Right ventricle myocardium superior (tissue), 1 donor: ENCODE measurements at regions of chr21 and their contacts with region 1.

Region 1: DNA sequence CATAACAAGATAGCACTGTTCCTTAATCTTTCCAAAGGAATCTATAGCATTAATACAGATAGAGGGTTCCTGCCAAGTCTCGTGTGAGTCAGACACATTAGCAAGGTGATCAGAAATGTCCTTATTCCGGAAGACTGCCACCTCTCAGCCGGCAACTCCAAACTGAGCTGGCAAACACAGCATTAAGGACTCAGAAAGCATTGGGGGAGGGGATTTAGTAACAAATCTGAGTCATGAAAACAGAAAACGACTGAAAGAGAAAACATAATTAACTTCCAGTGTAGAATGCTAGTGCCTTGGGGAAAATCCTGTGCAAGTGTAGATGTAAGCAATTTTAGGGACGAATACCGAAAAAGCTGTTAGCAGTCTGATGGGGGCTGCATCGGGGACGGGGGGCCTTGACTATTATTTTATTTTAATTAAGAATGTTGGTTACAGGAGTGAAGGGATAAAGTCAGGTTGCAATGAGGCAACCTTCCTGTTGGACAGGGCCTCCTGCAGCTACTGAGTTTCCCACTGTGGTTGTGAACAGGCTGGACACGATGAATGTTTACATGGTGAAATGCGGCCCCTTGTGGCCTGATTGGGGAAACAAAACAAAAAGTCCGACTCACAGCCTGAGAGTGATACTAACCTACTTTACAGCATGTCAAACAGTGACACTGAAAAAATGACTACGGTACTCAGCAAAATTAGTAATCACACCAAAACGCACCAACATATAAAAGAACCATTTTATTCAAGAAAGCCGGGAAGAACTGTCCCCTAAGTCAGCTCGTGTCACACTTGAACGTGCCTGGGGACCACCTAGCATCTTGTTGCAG is 20.7 kb downstream of the MIS18A start:
- DNase-seq: peak; percentile 57
- ATAC-seq: peak; percentile 90

Region 2: DNA sequence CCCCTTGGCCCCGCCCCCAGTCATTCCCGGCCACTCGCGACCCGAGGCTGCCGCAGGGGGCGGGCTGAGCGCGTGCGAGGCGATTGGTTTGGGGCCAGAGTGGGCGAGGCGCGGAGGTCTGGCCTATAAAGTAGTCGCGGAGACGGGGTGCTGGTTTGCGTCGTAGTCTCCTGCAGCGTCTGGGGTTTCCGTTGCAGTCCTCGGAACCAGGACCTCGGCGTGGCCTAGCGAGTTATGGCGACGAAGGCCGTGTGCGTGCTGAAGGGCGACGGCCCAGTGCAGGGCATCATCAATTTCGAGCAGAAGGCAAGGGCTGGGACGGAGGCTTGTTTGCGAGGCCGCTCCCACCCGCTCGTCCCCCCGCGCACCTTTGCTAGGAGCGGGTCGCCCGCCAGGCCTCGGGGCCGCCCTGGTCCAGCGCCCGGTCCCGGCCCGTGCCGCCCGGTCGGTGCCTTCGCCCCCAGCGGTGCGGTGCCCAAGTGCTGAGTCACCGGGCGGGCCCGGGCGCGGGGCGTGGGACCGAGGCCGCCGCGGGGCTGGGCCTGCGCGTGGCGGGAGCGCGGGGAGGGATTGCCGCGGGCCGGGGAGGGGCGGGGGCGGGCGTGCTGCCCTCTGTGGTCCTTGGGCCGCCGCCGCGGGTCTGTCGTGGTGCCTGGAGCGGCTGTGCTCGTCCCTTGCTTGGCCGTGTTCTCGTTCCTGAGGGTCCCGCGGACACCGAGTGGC is 598.5 kb before region 1 on chr21 and contains the start of gene SOD1:
- intact Hi-C with region 1: no loop called
- DNase-seq: peak; percentile 98
- ATAC-seq: peak; percentile 97
- total RNA-seq, gene SOD1: 445 TPM

Region 3: GRCh38 chr21:31786164-31786920 is 471.8 kb before region 1 on chr21:
- intact Hi-C with region 1: loop called (anchors 5 kb)
- DNase-seq: no peak
- ATAC-seq: no peak

Region 4: GRCh38 chr21:32181457-32181856 is 76.7 kb before region 1 on chr21:
- intact Hi-C with region 1: no loop called
- DNase-seq: peak; percentile 43
- ATAC-seq: peak; percentile 95

Region 5: GRCh38 chr21:32312326-32312725 is 54.2 kb after region 1 on chr21:
- intact Hi-C with region 1: no loop called
- DNase-seq: peak; percentile 60
- ATAC-seq: peak; percentile 85

Region 6: GRCh38 chr21:33299181-33299752 is 1041.1 kb after region 1 on chr21:
- intact Hi-C with region 1: no loop called
- DNase-seq: no peak
- ATAC-seq: peak; percentile 26